ENCODE measurements at regions of chr1 and their contacts with region 1.

Region 1: DNA sequence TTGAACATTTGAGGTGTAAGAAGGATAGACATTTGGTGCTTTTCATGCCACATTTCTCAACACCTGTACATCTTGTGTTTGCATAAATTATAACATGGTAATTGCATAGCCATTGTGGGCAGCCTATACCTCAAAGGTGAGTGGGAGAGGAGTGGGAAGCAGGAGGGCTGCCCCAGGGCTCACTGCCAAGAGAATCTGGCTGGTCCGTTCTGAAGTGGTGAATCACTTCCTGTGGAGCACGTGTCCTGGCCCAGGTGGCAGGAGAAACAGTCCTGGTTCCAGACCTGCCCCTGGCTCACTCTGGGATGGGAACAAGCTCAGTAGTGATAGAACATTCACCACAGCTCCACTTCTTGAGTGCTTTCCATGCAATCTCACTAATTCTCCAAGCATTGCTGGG is 11.6 kb upstream of the OLFML2B start:
- DNase-seq: peak in 1 of 4 donors; percentile 50
- ATAC-seq: no peak
- H3K4me3 ChIP-seq: no peak overlapping the region
- H3K27ac ChIP-seq: no peak overlapping the region
- H3K4me1 ChIP-seq: no peaks in the 10 kb centered on the region
- H3K27me3 ChIP-seq: no peaks in the 10 kb centered on the region
- CTCF ChIP-seq: no peak
- POLR2A ChIP-seq: no peak

Region 2: DNA sequence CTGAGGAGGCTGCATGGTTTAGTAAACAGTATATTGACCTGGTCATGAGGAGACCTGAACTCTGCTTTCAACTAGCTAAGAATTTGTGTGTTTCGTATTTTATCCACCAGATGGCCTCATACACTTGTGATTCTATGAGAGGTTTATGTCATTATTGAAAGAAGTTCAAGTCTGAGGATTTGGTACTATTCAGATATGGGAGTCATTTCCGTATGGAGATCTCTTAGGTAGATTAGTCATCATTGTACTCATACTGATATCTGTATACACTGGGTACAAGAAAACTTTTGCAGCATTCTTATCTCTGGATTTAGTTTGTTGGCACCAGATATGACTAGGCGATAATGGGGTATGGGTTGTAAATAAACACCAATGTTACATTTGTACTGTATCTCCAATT is 242.5 kb before region 1 on chr1:
- intact Hi-C with region 1: loop called (anchors 10 kb)
- DNase-seq: no peak
- ATAC-seq: peak; percentile 47
- H3K4me3 ChIP-seq: no peak overlapping the region
- H3K27ac ChIP-seq: no peak overlapping the region
- H3K4me1 ChIP-seq: peaks cover 6% of the 10 kb centered on the region
- H3K27me3 ChIP-seq: no peaks in the 10 kb centered on the region
- CTCF ChIP-seq: peak; percentile 24 to 56 (median 47)
- POLR2A ChIP-seq: no peak

Region 3: DNA sequence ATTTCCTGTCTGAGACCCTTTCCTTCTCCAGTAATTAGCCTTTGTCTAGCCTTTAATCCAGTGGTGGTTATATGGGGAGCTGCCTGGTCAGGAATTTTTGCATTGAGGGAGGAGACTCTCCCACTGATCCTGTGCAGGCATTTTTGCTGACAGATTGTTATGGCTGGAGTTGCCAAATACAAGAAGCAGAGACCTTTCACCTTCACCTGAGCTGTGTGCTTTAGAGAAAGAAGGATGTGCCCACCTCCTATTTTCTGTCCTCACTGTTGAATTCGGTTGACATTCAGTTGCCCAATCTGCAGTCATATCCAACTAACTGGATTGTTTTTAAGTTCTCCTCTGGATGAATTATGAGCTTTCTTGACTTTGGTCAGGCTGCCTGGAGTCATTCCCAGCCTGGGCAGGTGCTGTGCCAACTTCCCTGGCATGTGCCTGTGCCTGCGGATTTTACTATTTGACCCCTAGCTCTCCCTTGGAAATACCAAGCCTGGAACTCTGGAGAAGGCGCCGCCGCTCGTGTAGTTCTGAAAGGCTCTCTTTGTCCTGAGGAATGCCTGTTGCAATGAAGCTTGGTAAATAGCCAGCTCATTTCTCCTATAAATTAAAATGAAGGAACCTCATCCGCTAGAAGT is 178.2 kb after region 1 on chr1:
- intact Hi-C with region 1: no loop called
- DNase-seq: peak; percentile 76 to 87 (median 84)
- ATAC-seq: peak; percentile 89
- H3K4me3 ChIP-seq: no peak overlapping the region
- H3K27ac ChIP-seq: peak overlapping the region; percentile 40 to 78 (median 54)
- H3K4me1 ChIP-seq: peaks cover 40% of the 10 kb centered on the region
- H3K27me3 ChIP-seq: no peaks in the 10 kb centered on the region
- CTCF ChIP-seq: no peak
- POLR2A ChIP-seq: no peak